Mammary epithelial cell (primary cell): ENCODE measurements at regions of chr18 and their contacts with region 1.

Region 1: DNA sequence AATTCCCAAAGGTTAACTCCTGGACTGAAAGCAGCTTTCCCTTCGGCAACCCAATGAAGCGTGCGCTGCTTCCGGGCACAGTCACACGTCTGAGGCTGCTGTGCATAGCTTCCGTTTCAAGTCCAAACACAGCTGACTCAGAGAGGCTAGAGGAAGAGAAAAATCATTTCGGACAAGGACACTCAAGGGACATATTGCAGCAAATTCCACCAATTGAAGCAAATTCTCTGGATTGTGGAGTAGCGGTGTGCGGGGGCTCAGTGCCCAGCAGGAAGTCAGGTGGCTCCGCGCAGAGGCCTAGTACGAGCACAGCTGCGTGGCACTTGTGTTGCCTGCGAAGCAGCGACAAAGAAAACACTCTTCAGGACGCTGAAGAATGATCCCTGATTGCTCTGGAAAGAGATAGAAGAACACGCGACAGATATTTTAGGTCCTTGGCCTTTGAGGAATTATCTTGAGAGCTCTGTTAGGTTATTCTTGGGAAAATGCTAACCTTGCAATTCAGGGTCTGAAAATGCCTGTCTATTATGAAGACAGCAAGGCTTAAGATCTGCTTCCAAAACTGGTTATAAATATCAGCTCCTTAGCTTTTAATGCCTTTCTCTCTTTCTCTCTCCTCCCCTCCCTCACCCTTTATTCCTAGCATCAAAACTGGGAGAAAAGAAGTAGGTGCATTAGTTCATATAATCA is 352.6 kb upstream of the DLGAP1 start:
- DNase-seq: no peak
- H3K4me3 ChIP-seq: no peak overlapping the region
- H3K27ac ChIP-seq: no peak overlapping the region
- H3K4me1 ChIP-seq: no peaks in the 10 kb centered on the region
- H3K27me3 ChIP-seq: peaks cover 2% of the 10 kb centered on the region
- CTCF ChIP-seq: no peak

Region 2: DNA sequence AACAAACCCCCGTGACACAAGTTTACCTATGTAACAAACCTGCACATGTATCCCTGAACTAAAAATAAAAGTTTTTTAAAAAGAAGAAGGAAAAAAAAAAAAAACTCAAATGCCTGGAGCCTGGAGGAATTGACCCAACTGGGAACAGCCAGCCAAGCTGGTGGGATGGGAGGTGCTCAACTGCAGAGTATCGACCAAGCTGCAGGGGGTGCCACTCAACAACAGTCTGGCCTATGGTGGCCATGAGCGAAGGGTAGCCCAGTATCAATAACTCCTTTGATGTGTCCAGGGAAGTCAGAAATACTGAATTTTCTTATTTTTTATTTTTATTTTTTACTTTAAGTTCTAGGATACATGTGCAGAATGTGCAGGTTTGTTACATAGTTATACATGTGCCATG is 42.3 kb before region 1 on chr18:
- CTCF ChIA-PET with region 1: no interaction called
- dilution Hi-C with region 1: loop called (anchors 5 kb)
- in situ Hi-C with region 1: no loop called
- intact Hi-C with region 1: no loop called
- DNase-seq: no peak
- H3K4me3 ChIP-seq: no peak overlapping the region
- H3K27ac ChIP-seq: no peak overlapping the region
- H3K4me1 ChIP-seq: no peaks in the 10 kb centered on the region
- H3K27me3 ChIP-seq: no peaks in the 10 kb centered on the region
- CTCF ChIP-seq: no peak